SK-N-SH (cell line): ENCODE measurements at regions of chr9 and their contacts with region 1.

Region 1: DNA sequence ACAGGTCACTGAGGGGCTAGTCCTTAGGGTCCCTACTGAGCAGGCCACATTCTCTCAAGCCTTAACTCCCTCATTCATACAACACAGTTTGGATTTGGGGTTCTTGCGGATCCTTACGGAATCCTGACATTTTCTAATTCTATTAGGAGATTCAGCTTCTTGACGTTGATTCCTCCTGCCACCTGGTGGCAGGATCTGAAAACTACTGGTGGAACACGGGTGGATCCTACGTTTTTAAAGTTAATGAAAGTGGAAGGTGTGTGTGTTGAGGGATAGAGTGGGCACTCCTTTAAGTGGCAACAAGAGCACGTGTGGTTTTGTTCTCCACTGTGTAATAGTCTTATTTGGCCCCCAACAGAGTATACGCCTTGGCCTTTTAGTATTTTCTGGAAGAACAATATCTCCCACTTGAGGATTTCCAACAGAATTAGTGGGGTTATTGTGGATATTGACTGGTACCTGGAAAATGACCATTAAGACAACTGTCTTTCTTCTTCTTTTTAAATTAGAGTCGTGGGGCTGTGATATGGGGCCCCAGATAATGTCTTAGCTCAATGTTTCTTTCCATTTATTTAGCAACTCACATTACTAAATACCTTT is 25.2 kb downstream of the SLC28A3 start:
- DNase-seq: peak; percentile 53
- H3K4me3 ChIP-seq: peak overlapping the region in 1 of 2 experiments; percentile 38; a peak in 1 of 4 replicates
- H3K27ac ChIP-seq: no peak overlapping the region
- H3K4me1 ChIP-seq: no peaks in the 10 kb centered on the region
- H3K27me3 ChIP-seq: no peaks in the 10 kb centered on the region
- CTCF ChIP-seq: peak; percentile 88
- EP300 ChIP-seq: no peak
- RAD21 ChIP-seq: peak; percentile 82

Region 2: GRCh38 chr9:83937911-83938323 is 377.5 kb before region 1 on chr9:
- CTCF ChIA-PET with region 1: interaction called, 19 read pairs
- POLR2A ChIA-PET with region 1: no interaction called
- DNase-seq: peak; percentile 54
- H3K4me3 ChIP-seq: no peak overlapping the region
- H3K27ac ChIP-seq: no peak overlapping the region
- H3K4me1 ChIP-seq: peaks cover 2 to 32% of the 10 kb centered on the region in 2 experiments; a peak in 2 of 4 replicates
- H3K27me3 ChIP-seq: no peaks in the 10 kb centered on the region
- CTCF ChIP-seq: peak; percentile 73
- EP300 ChIP-seq: no peak
- RAD21 ChIP-seq: peak; percentile 92

Region 3: DNA sequence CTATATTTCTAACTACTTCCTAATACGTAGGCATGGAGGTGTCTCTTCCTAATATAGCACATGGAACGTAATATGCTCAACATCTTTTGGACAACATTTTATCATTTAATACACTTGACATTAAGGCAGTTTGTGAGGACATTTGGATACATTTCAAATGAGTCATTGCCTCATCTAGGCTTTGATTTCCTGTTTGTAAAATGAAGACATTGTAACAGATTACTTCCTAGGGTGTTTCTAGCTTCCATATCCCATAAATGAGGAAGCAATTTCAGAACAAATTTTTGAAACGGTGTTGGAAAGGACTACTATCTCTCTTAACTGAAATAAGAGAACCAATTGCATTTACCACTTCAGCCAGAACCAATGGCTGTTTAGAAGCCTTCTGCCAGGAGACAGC is 13.5 kb before region 1 on chr9:
- CTCF ChIA-PET with region 1: interaction called, 11 read pairs
- POLR2A ChIA-PET with region 1: no interaction called
- DNase-seq: no peak
- H3K4me3 ChIP-seq: no peak overlapping the region
- H3K27ac ChIP-seq: peak overlapping the region in 1 of 2 experiments; percentile 3; a peak in 1 of 4 replicates
- H3K4me1 ChIP-seq: peaks cover 0 to 8% of the 10 kb centered on the region in 2 experiments; a peak in 2 of 4 replicates
- H3K27me3 ChIP-seq: no peaks in the 10 kb centered on the region
- CTCF ChIP-seq: no peak
- EP300 ChIP-seq: no peak
- RAD21 ChIP-seq: no peak